ENCODE measurements at regions of chr11 and their contacts with region 1.

Region 1: GRCh38 chr11:86068951-86069407 is at the start of gene PICALM:
- DNase-seq: peak; percentile 99
- ATAC-seq: peak; percentile 87
- H3K4me3 Mint-ChIP-seq: peak within 1 kb of the TSS; percentile 89
- H3K27ac Mint-ChIP-seq: peak within 1 kb of the TSS; percentile 91
- H3K4me1 Mint-ChIP-seq: peaks cover 27% of the 10 kb centered on the region
- H3K27me3 Mint-ChIP-seq: no peaks in the 10 kb centered on the region
- total RNA-seq, gene PICALM: 63.8 to 88.3 TPM

Region 2: DNA sequence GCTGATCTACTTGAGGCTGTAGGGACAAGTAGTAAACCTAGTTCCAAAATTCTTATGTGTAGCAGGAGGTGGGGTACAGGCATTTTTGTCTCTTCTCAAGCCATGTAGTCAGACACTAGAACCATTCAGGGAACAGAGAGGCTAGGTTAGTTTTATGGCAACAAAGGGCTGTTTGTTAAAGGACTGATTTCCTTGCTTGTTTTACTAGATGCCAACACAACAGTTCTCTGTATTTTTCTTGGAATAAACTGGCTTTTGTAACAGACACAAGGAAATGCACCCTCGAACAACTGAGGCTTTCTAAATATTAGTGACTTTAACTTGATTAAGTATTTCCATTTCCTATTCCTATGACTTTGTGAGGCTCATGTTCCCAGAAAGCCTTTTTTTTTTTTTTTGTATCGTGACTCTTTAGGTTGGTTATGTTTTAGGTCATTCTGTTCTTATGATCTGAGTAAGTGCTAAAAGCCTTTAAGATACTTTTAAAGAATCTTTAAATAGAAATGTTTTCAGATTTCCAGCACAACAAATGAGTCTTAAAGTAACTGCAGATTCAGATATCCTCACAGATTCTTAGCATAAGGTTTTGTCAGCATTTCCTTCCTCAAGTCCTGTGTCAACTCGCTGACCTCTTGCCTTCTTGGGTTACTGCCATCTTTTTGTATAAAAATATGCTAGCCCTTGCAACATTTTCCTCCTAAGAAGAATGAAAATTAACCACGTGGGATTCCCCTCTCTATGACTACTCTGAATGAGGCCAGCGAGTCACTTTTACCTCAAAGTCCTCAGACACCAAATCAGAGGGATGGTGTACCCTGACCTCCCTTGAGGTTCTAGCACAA is 121.3 kb before region 1 on chr11:
- CTCF ChIA-PET with region 1: no interaction called
- POLR2A ChIA-PET with region 1: no interaction called
- intact Hi-C with region 1: loop called (anchors 2 to 5 kb)
- DNase-seq: peak; percentile 62
- ATAC-seq: peak; percentile 80
- H3K4me3 Mint-ChIP-seq: peak overlapping the region; percentile 46
- H3K27ac Mint-ChIP-seq: peak overlapping the region; percentile 97
- H3K4me1 Mint-ChIP-seq: peaks cover 48% of the 10 kb centered on the region
- H3K27me3 Mint-ChIP-seq: no peaks in the 10 kb centered on the region

Region 3: DNA sequence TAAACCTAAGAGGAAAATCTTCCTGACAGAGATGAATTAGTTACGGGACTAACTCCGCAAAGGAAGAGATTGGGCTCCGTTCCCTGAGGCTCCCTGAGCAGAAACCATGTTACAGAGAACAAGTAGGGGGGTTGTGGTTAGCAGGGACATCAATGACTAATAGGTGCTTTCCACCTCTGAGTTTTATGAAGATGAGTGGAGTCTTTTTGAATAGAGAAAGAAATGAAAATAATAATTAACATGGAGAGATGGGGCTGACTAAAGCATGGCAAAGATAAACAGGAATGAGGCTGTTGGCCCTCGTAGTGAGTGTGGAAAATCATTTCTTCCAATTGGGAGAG is 47.4 kb after region 1 on chr11:
- CTCF ChIA-PET with region 1: interaction called, 3 read pairs
- POLR2A ChIA-PET with region 1: no interaction called
- intact Hi-C with region 1: loop called in 1 of 2 experiments (anchors 2 kb)
- DNase-seq: peak; percentile 52
- ATAC-seq: peak; percentile 95
- H3K4me3 Mint-ChIP-seq: peak overlapping the region; percentile 0
- H3K27ac Mint-ChIP-seq: peak overlapping the region; percentile 66
- H3K4me1 Mint-ChIP-seq: peaks cover 32% of the 10 kb centered on the region
- H3K27me3 Mint-ChIP-seq: peaks cover 7% of the 10 kb centered on the region

Region 4: DNA sequence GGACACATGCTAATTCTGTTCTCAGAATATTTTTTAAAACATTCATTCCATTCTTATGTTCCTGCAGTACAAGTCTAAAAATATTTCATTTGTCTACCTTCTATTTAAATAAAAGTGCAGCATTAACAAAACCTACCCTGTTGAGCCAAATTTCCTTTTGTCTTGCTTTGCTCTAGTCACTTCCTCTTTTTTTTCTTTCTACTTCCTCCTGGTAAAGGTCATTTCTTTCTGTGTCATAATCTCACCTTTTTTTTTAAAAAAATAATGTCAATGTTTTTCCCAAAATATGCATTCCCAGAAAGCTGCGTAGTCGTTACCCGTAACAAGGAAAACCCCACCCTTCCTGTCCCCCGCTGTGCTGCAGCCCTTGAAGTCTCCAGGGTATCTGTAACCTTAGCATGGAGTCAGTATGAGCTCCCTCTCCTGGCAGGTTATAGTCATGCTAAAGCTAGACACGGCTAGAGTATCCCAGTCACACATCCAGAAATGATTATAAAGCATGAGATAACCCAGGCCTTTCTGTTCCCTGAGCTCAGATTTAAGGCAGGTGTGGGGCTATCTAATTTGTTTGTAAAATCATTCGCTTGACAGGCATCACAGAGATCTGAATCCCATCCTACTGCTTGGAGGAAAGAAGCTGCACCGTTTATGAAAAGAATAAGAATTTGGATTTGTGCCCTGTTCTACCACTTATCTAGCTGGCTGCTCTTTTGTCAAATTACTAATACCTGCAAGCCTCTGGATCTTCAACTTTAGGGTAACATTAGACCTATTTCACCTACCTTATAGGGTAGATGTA is 124.5 kb after region 1 on chr11:
- CTCF ChIA-PET with region 1: interaction called, 27 read pairs
- POLR2A ChIA-PET with region 1: interaction called, 5 read pairs
- intact Hi-C with region 1: loop called (anchors 1 to 2 kb)
- DNase-seq: peak; percentile 74
- ATAC-seq: peak; percentile 99
- H3K4me3 Mint-ChIP-seq: peak overlapping the region; percentile 53
- H3K27ac Mint-ChIP-seq: peak overlapping the region; percentile 82
- H3K4me1 Mint-ChIP-seq: peaks cover 27% of the 10 kb centered on the region
- H3K27me3 Mint-ChIP-seq: peaks cover 6% of the 10 kb centered on the region

Region 5: GRCh38 chr11:86230921-86231430 is 162.0 kb after region 1 on chr11:
- CTCF ChIA-PET with region 1: interaction called, 5 read pairs
- POLR2A ChIA-PET with region 1: no interaction called
- intact Hi-C with region 1: loop called in 1 of 2 experiments (anchors 1 kb)
- DNase-seq: no peak
- ATAC-seq: peak; percentile 28
- H3K4me3 Mint-ChIP-seq: peak overlapping the region; percentile 20
- H3K27ac Mint-ChIP-seq: peak overlapping the region; percentile 86
- H3K4me1 Mint-ChIP-seq: peaks cover 65% of the 10 kb centered on the region
- H3K27me3 Mint-ChIP-seq: no peaks in the 10 kb centered on the region

Measured in activated CD4-positive, alpha-beta T cell treated with anti-CD3 and anti-CD28 coated beads for 36 hours (primary cell).